ENCODE measurements at regions of chr1 and their contacts with region 1.

Region 1: DNA sequence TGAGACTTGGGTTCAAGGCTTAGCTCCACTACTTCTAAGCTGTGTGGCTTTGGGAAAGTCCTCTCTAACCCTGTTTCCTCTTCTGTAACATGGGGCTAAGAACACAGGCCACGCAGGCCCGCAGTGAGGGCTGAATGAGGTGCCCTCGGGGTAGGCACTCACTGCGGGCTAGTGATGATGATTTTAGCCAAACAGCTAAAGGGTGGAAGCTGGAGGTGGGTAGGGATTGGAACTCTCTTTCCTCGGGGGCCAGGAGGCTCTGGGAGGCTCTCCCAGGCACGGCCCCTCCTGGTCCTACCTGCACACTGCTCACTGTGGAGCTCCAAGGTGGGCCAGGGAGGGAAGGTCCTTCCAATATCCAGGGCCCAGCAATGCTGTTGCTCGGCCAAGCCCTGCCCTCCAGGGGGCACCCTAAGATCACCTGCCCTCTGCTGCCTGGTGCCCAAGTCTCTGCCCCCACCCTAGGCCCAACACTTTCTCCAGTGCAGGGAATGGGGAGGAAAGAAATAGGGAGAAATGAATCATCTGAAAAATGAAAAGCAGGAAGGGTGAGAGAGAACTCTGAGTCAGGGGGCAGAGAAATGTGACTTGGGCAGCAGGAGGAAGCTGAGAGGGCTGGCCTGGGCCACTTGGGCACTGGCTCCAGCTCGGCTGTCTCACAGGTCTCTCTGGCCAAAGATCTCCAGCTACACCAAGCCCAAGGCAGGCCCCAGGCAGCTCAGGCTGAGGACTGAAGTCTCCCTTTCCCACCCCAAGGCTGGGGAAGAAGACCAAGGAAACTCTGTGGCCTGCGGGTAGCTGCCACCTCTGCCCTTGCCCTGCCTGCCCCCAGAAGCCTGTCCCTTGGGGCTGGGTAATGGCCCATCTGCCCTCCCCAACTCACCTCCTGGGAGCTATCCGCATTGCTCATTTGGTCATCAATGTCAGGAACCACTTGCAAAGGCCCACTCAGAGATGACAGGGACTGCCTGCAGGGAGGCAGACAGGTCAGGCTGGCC is 19.3 kb upstream of the EVA1B start:
- DNase-seq: no peak
- H3K4me3 ChIP-seq: no peak overlapping the region
- H3K27ac ChIP-seq: peak overlapping the region in 1 of 2 donors; percentile 18
- H3K4me1 ChIP-seq: no peaks in the 10 kb centered on the region
- H3K27me3 ChIP-seq: no peaks in the 10 kb centered on the region
- CTCF ChIP-seq: peak in 3 of 4 experiments; percentile 64 to 74 (median 67)
- POLR2A ChIP-seq: no peak

Region 2: DNA sequence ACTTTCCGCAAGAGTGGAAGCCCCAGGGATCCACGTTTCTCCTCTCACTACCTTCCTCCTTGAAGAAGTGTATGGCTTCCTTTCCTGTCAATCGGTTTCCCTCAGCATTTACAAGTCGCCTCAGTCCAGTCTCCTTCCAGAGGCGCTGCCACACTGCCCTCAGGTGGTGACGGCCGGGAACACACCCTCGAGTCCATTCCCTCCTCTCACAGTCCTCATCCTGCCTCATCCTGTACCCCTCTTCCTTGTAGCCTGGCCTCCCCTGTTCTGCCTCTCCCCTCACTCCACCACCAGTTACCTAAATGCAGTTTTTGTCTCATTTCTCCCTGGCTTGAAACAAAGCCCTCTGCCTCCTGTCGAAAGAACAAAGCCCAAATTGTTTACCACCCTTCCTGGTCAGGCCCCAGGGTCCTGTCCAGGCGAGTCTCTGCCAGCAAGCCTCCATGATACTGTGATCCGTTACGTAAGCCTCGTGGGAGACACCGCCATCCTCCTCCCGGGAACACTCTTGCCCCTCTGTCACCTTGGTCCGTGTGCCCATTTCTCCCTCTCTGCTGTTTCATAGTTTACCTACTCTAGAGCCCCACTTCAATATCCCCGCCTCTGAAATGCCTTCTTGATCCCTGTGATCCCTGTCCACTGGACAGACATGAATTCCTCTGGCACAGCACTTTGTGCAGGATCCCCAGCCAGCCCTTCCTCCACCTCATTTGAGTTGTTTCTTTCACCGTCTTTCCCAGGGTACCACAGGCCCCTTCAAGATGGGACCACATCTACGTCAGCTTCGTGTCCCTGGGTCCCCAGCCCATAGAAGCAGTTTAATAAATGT is 78.3 kb after region 1 on chr1:
- intact Hi-C with region 1: loop called (anchors 2 kb)
- DNase-seq: peak; percentile 84
- H3K4me3 ChIP-seq: no peak overlapping the region
- H3K27ac ChIP-seq: no peak overlapping the region
- H3K4me1 ChIP-seq: no peaks in the 10 kb centered on the region
- H3K27me3 ChIP-seq: no peaks in the 10 kb centered on the region
- CTCF ChIP-seq: peak; percentile 70 to 95 (median 86)
- POLR2A ChIP-seq: no peak